ENCODE measurements at regions of chr2 and their contacts with region 1.

Region 1: GRCh38 chr2:120312861-120313694 is 32.9 kb upstream of the INHBB start:
- DNase-seq: no peak
- H3K4me3 ChIP-seq: peak overlapping the region; percentile 16 to 61 (median 45)
- H3K27ac ChIP-seq: peak overlapping the region in 3 of 4 donors; percentile 12 to 54 (median 51)
- H3K4me1 ChIP-seq: peaks cover 0 to 19% (median 8%) of the 10 kb centered on the region in 3 donors
- H3K27me3 ChIP-seq: peaks cover 0 to 14% (median 0%) of the 10 kb centered on the region in 4 donors
- CTCF ChIP-seq: peak; percentile 85 to 95 (median 91)
- POLR2A ChIP-seq: no peak

Region 2: DNA sequence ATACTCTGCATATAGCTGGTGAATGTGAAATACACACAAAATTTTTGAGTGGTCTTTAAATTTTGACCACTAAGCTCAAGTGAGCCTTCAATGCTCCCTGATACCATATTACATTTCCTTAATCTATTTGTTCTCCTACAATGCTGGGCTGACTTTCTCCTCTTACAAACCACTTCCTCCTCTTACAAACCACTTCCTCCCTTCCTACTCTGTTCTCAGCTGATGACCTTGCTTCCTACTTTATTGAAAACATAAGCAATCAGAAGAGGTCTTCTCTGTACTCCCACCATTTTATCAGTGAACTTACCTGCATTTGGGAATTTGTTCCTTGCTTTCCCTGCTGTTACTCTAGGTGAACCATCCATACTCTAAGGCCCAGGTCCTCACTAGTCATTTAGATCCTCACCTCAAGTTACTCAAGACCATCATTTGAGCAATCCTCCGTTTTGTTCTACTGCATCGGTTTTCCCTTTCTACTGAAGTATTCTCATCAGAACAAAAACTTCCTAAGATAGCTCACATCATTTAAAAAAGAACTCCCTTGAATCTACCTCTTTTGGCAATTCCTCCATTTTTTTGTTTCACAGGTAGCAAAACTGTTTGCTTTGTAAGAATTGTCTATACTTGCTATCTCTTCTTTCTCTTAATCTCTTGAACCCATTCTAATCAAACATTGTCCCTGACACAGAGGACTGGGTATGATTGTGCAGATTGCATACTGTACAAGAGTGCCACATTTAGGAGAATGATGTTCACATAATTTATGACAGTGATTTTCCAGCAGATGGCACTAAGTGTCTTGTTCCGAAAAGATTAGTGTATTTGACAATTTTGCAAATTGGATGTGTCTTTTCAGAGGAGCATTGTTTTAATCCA is 203.7 kb before region 1 on chr2:
- intact Hi-C with region 1: loop called (anchors 10 kb)
- DNase-seq: no peak
- H3K4me3 ChIP-seq: no peak overlapping the region
- H3K27ac ChIP-seq: no peak overlapping the region
- H3K4me1 ChIP-seq: peaks cover 14 to 28% (median 21%) of the 10 kb centered on the region in 3 donors
- H3K27me3 ChIP-seq: no peaks in the 10 kb centered on the region
- CTCF ChIP-seq: peak in 3 of 6 experiments; percentile 30 to 57 (median 32)
- POLR2A ChIP-seq: no peak